Heart left ventricle (tissue), 16 donors: ENCODE measurements at regions of chr1 and their contacts with region 1.

Region 1: GRCh38 chr1:33137800-33138199 is 44.0 kb downstream of the TRIM62 start:
- DNase-seq: peak in 3 of 5 donors; percentile 42 to 64 (median 47)
- ATAC-seq: peak in 2 of 4 donors; percentile 48 to 50
- H3K4me3 ChIP-seq: no peak overlapping the region
- H3K27ac ChIP-seq: no peak overlapping the region
- H3K4me1 ChIP-seq: peaks cover 0 to 13% (median 0%) of the 10 kb centered on the region in 12 donors
- H3K27me3 ChIP-seq: no peaks in the 10 kb centered on the region
- CTCF ChIP-seq: peak; percentile 31 to 64 (median 52)
- POLR2A ChIP-seq: no peak

Region 2: DNA sequence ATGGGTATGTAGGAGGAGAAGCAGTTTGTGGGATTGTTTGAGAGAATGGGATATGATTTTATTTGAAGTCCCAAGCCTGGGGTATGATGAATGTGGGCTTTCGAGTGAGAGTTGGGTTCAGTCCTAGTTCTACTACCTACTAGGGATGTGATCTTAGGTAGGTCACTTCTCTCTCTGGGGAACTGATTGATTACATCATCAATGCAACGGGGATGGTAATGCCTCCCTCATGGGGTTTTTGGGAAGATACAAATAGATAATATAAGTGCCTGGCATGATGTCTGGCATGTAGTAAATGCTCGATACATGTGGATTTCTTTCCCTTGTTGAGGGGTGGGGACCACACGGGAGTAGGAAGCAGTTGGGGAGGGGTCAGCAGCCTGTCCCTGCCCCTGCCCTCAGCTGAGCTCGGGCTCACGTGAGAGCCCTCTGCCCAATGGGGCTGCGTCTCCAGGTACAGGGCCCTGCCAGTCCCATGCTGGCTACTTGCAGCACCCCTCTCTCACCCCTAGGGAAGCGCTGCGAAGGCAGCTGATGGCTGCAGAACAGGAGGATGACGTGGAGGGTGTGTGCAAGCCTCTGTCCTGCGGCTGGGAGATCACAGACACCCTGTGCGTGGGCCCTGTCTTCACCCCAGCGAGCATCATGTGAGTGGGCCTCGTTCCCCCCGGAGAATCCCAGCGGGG is 18.1 kb before region 1 on chr1:
- intact Hi-C with region 1: no loop called
- DNase-seq: no peak
- ATAC-seq: peak in 1 of 4 donors; percentile 10
- H3K4me3 ChIP-seq: no peak overlapping the region
- H3K27ac ChIP-seq: no peak overlapping the region
- H3K4me1 ChIP-seq: no peaks in the 10 kb centered on the region
- H3K27me3 ChIP-seq: no peaks in the 10 kb centered on the region
- CTCF ChIP-seq: no peak
- POLR2A ChIP-seq: no peak

Region 3: GRCh38 chr1:33181921-33182341 is 44.1 kb after region 1 on chr1 and contains the start of gene TRIM62:
- intact Hi-C with region 1: loop called in 1 of 10 experiments (anchors 5 kb)
- DNase-seq: peak; percentile 90 to 94 (median 92)
- ATAC-seq: peak; percentile 78 to 92 (median 90)
- H3K4me3 ChIP-seq: peak within 1 kb of the TSS; percentile 59 to 93 (median 85)
- H3K27ac ChIP-seq: peak within 1 kb of the TSS; percentile 29 to 89 (median 76)
- H3K4me1 ChIP-seq: peaks cover 0 to 26% (median 9%) of the 10 kb centered on the region in 12 donors
- H3K27me3 ChIP-seq: peaks cover 0 to 4% (median 0%) of the 10 kb centered on the region in 9 donors
- CTCF ChIP-seq: no peak
- POLR2A ChIP-seq: peak in 1 of 2 donors; percentile 57
- total RNA-seq, gene TRIM62: 1.9 to 6.1 (median 3.3) TPM

Region 4: DNA sequence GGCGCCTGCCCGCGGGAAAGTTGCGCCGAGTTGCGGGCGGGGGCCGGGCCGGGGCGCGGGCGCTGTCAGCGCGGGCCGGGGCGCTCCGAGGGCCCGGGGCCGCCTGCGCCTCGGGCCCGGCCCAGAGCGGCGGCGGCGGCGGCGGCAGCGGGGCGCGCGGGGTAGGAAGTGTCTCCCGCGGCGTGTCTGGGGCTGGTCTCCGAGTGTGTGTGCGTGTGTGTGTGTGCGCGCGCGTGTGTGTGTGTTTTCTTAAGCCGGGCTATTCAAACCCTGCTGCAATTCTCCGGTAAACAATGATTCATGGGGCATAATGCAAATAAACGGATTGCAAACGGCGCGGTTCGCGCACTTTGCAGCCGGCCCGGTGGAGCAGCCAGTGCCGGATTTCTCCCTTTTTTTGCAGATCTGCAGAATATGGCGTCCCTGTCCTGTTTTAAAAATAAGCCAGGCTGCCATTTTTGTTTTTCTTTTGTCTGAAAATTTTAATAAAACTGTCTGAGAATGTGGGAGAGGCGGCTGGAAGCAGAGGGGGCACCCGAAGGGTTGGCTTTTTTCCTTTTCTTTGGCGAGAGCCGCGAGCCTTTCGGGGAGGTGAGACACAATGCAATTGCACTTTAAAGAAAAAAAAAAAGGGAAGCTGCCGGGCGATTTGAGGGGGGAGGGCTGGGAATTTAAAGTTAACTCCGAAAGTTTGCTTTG is 119.0 kb after region 1 on chr1:
- intact Hi-C with region 1: loop called in 1 of 10 experiments (anchors 10 kb)
- DNase-seq: peak; percentile 53 to 77 (median 58)
- ATAC-seq: peak in 3 of 4 donors; percentile 21 to 50 (median 40)
- H3K4me3 ChIP-seq: peak overlapping the region; percentile 35 to 99 (median 80)
- H3K27ac ChIP-seq: peak overlapping the region; percentile 51 to 94 (median 88)
- H3K4me1 ChIP-seq: peaks cover 18 to 56% (median 44%) of the 10 kb centered on the region in 12 donors
- H3K27me3 ChIP-seq: no peaks in the 10 kb centered on the region
- CTCF ChIP-seq: no peak
- POLR2A ChIP-seq: no peak

Region 5: GRCh38 chr1:33378976-33379375 is 241.2 kb after region 1 on chr1:
- intact Hi-C with region 1: loop called in 1 of 10 experiments (anchors 10 kb)
- DNase-seq: no peak
- ATAC-seq: peak in 2 of 4 donors; percentile 56 to 60
- H3K4me3 ChIP-seq: no peak overlapping the region
- H3K27ac ChIP-seq: peak overlapping the region in 9 of 12 donors; percentile 20 to 72 (median 56)
- H3K4me1 ChIP-seq: peaks cover 0 to 74% (median 48%) of the 10 kb centered on the region in 12 donors
- H3K27me3 ChIP-seq: no peaks in the 10 kb centered on the region
- CTCF ChIP-seq: peak in 2 of 12 donors; percentile 12
- POLR2A ChIP-seq: no peak

Region 6: GRCh38 chr1:33460947-33461629 is 323.3 kb after region 1 on chr1:
- intact Hi-C with region 1: loop called in 1 of 10 experiments (anchors 10 kb)
- DNase-seq: peak in 4 of 5 donors; percentile 63 to 80 (median 74)
- ATAC-seq: peak; percentile 75 to 81 (median 78)
- H3K4me3 ChIP-seq: peak overlapping the region in 2 of 12 donors; percentile 23 to 25
- H3K27ac ChIP-seq: peak overlapping the region; percentile 68 to 95 (median 86)
- H3K4me1 ChIP-seq: peaks cover 0 to 68% (median 33%) of the 10 kb centered on the region in 12 donors
- H3K27me3 ChIP-seq: no peaks in the 10 kb centered on the region
- CTCF ChIP-seq: no peak
- POLR2A ChIP-seq: no peak

Region 7: GRCh38 chr1:33616773-33617172 is 479.0 kb after region 1 on chr1:
- intact Hi-C with region 1: loop called in 2 of 10 experiments (anchors 10 kb)
- DNase-seq: no peak
- ATAC-seq: no peak
- H3K4me3 ChIP-seq: no peak overlapping the region
- H3K27ac ChIP-seq: no peak overlapping the region
- H3K4me1 ChIP-seq: peaks cover 0 to 6% (median 0%) of the 10 kb centered on the region in 12 donors
- H3K27me3 ChIP-seq: peaks cover 0 to 13% (median 0%) of the 10 kb centered on the region in 9 donors
- CTCF ChIP-seq: no peak
- POLR2A ChIP-seq: no peak